Dendritic cell treated with granulocyte-macrophage colony-stimulating factor and Interleukin-4, amounts not matched to agents 40 ng/mL and 50 ng/mL, for 4 days (primary cell): ENCODE measurements at regions of chr11 and their contacts with region 1.

Region 1: DNA sequence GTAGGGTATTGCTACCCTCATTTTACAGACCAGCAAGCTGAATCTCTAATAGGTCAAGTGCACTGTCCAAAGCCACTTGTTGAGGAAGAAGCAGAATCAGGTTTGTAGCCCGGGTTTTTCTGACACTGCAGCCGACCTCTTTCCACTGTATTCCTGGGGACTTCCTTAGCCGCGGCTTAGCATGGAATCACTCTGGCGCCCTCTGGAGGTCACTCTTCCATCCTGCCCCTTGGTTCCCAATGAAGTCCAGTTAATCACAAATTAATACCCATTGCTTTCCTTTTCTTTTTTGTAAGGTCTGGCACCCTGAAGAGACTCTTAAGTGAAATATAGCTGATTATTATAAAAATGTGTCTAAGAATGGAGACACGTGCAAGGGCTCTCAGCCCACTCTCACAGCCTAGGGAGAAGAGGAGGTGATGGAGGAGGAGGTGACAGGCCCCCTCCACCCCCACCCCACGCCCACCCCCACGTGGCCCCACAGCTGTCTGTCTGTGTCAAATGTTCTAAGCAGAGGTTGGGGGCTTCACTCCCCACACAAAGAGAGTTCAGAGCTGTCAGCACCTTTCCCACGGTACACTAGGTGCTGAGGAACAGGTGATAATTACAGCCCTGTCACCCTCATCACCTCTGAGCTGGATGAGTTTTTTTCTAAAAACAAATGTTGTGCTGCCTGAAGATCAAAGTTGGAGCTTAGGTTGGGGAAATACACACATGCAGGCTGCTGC is 57.7 kb upstream of the DRD2 start:
- H3K4me3 Mint-ChIP-seq: no peak overlapping the region
- H3K27ac Mint-ChIP-seq: no peak overlapping the region
- H3K4me1 Mint-ChIP-seq: no peaks in the 10 kb centered on the region
- H3K27me3 Mint-ChIP-seq: peaks cover 9% of the 10 kb centered on the region

Region 2: DNA sequence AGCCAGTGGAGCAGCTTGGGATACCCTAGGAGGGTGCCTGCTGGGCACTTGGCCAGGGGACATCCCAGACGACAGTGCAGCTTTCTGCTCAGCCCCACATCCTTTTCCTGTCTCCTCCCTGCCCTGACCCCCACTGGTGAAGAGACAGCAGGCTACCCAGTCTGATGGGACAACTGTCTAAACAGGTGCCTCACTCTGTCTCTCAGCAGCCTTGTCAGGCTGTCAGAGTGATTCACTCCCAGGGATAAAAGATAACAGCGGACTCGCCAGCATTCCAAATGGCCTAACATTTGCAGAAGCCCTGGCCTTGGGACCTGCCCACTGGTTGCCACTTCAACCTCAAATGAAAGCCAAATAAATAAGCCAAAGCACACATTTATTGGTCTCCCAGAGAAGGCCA is 953.6 kb before region 1 on chr11:
- intact Hi-C with region 1: loop called (anchors 5 kb)
- H3K4me3 Mint-ChIP-seq: no peak overlapping the region
- H3K27ac Mint-ChIP-seq: no peak overlapping the region
- H3K4me1 Mint-ChIP-seq: no peaks in the 10 kb centered on the region
- H3K27me3 Mint-ChIP-seq: peaks cover 1% of the 10 kb centered on the region

Region 3: DNA sequence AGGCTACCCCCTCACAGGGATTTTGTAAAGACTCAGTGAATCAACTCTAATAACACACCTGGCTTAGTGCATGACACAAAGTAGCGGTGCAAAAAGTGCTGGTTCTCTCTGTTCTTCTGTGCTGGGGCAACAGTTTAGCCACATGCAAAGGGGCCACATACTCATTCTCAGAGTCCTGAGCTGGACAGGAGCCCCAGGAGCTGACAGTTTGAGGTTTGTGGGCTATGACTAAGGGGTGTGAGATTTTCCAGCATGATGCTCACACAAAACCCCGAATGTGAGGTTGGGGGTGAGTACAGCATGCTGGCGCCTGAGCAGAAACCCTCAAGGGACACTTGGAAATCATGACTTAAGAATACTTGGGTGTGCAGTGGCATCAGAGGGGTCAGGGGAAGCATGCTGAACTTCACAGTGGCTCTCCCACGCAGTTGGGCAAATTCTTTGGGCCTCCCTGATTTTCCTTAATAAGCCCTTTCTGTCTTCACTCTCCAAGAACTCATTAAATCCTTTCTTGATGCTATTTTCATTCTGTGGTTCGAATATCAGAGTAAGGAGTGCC is 142.2 kb after region 1 on chr11:
- intact Hi-C with region 1: no loop called
- H3K4me3 Mint-ChIP-seq: no peak overlapping the region
- H3K27ac Mint-ChIP-seq: no peak overlapping the region
- H3K4me1 Mint-ChIP-seq: no peaks in the 10 kb centered on the region
- H3K27me3 Mint-ChIP-seq: peaks cover 1% of the 10 kb centered on the region